Tibial artery (tissue), 4 donors: ENCODE measurements at regions of chr7 and their contacts with region 1.

Region 1: GRCh38 chr7:22110227-22110839 is 164.6 kb upstream of the CDCA7L start:
- DNase-seq: peak; percentile 67 to 70
- H3K4me3 ChIP-seq: no peak overlapping the region
- H3K27ac ChIP-seq: no peak overlapping the region
- H3K4me1 ChIP-seq: peaks cover 0 to 8% (median 4%) of the 10 kb centered on the region in 4 donors
- H3K27me3 ChIP-seq: no peaks in the 10 kb centered on the region
- CTCF ChIP-seq: peak; percentile 75 to 92

Region 2: DNA sequence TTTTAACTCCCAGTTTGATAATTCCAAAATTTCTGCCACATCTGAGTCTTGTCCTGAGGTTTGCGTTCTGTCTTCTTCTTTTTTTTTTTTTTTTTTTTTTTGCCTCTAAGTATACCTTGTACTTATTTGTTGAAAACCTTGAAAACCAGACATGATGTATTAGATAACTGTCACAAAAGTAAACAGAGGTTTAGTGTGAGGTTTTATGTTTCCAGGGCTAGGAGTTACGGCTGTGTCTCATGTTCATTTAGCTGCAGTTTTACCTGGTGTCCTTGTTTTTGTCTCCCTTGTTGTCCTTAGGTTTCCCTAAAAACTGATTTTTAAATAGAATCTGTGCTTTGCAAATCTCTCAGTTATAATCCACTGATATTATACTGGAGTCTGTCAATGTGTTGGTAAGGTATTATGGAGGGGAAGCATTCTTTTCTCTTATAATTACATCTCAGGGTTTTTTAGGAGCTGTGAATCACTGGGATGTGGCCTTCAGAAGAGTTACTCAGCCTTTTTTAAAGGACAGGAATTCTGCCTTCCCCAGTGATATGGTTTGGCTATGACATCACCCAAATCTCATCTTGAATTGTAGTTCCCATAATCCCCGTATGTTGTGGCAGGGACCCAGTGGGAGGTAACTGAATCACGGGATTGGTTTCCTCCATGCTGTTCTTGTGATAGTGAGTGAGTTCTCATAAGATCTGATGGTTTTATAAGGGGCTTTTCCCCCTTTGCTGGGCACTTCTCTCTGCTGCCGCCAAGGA is 259.6 kb before region 1 on chr7:
- intact Hi-C with region 1: no loop called
- DNase-seq: no peak
- H3K4me3 ChIP-seq: no peak overlapping the region
- H3K27ac ChIP-seq: no peak overlapping the region
- H3K4me1 ChIP-seq: no peaks in the 10 kb centered on the region
- H3K27me3 ChIP-seq: no peaks in the 10 kb centered on the region
- CTCF ChIP-seq: no peak

Region 3: DNA sequence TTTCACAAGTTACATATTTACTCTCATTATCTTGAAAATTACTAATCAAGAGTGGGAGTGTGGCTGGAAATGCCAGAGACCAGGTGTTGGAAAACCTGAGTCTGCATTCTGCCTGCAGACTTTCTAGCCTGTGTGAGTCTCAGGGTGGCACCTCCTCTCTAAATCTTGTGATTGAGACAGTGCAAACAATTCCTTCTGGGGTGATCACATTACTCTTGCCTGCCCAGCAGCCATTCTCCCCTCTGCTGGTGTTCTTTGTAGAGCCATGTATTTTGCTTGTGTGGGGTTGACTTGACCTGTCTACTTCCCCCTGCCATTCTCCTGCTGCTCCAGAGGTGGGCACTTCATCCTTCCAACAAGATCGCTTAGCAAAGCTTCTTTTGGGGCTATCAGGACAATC is 145.5 kb after region 1 on chr7:
- intact Hi-C with region 1: loop called (anchors 5 kb)
- DNase-seq: no peak
- H3K4me3 ChIP-seq: peak overlapping the region in 1 of 2 donors; percentile 19
- H3K27ac ChIP-seq: no peak overlapping the region
- H3K4me1 ChIP-seq: peaks cover 0 to 10% (median 1%) of the 10 kb centered on the region in 4 donors
- H3K27me3 ChIP-seq: no peaks in the 10 kb centered on the region
- CTCF ChIP-seq: no peak

Region 4: DNA sequence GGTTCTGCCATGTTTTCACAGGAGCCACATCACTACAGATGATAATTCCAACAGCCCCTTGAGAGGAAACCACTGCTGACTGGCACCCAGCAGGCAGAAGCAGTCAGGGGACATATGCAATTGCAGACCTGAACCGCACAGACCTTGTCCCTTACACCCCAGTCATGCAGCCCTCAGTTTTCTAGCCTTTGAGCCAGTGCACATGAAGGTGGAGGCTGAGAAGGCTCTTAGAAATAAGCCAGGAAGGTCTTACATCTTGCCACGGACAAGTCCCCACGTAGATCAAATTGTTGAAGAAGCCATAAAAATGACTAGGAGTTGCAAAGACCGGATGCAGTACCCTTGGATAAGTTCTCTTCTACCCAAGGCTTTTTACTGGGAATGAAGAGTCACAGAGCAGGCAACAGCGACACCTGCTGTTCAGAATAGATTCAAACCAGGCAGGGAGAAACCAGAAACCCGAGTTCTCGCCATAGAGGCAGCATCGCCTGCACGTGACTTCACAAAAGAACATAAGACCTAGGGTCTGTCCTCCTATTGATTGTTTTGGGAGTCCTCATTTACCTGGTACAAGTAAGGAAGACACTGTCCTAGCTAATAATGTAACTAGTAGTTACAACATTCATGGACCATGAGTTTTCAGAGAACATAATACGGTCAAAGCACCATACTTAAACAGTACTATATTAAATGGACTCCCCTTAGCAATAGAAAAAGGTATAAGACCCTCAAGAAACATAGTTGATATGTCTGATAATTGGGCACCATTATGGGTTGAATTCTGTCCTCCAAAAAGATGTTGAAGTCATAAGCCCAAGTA is 378.5 kb after region 1 on chr7:
- intact Hi-C with region 1: loop called (anchors 2 kb)
- DNase-seq: peak; percentile 67 to 72
- H3K4me3 ChIP-seq: no peak overlapping the region
- H3K27ac ChIP-seq: no peak overlapping the region
- H3K4me1 ChIP-seq: no peaks in the 10 kb centered on the region
- H3K27me3 ChIP-seq: no peaks in the 10 kb centered on the region
- CTCF ChIP-seq: peak; percentile 87 to 89